ENCODE measurements at regions of chr15 and their contacts with region 1.

Region 1: DNA sequence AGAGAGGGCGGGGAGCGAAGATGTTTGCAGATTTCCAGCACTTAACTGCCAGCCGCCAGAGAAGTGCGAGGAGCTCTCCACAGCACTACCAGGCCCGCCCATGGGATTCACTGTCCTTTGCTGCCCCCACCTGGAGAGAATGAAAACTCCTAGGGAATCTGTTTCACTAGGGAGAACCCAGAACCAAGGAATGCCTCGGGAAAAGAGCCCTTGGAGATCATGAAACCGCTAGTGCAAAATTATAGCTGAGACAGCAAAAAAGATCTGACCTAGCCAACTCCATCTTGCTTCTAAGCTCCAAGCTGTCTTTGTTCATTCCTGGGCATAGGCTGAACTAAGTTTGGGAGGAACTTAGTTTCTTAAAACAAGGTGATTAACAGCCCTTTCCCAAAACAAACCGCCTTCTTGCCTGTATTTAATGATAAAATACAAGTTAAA is 82.6 kb upstream of the GCNT3 start:
- DNase-seq: peak; percentile 77
- H3K4me3 Mint-ChIP-seq: no peak overlapping the region
- H3K27ac Mint-ChIP-seq: no peak overlapping the region
- H3K4me1 Mint-ChIP-seq: peaks cover 9% of the 10 kb centered on the region
- H3K27me3 Mint-ChIP-seq: peaks cover 13% of the 10 kb centered on the region

Region 2: DNA sequence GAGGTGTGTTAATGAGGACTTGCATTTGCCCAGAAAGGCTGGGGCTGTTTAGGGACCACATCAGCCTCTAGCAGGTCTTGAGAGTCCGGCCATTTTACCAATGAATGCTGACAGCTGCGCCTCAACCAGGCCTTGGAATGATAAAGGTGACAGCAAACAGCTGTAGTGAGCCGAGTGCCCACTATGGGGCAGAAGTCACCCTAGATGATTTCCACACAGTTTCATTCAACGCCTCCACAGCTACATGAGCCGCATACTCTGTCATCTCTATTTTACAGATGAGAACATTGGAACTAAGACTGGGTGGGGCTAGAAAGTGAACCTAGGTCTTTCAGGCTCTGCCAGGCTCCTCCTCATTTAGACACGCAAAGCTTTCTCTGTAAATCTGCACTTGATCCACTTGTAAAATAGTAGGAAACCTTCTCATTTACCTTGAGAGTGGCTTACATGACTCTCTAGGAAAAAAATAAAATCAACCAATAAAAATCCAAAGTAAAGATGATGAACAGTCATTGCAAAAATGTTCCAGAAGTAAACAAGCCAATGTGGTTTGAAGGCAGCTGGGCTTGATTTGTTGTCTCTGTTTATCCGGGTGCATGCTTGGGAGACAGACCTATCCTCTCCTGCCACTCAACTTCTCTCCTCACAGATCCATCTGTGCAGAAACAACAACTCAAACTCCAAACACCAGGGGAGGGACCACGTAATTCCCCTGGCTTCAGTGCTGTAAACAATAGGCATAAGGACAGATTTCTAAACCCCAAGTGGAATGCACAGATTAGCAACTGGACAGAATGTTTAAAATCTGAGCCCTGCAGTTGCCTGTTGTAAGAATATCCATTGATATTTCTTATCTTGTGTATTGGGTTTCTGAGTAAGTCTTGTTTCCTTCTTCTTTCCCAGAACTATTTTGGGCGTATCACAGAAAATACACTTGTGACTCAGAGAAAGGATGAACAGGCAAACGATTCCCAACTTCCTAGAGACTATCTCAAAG is 353.9 kb before region 1 on chr15:
- CTCF ChIA-PET with region 1: interaction called, 10 read pairs
- POLR2A ChIA-PET with region 1: no interaction called
- intact Hi-C with region 1: no loop called
- DNase-seq: peak; percentile 70
- H3K4me3 Mint-ChIP-seq: no peak overlapping the region
- H3K27ac Mint-ChIP-seq: no peak overlapping the region
- H3K4me1 Mint-ChIP-seq: peaks cover 14% of the 10 kb centered on the region
- H3K27me3 Mint-ChIP-seq: peaks cover 14% of the 10 kb centered on the region

Region 3: GRCh38 chr15:59543721-59544547 is 14.9 kb after region 1 on chr15:
- CTCF ChIA-PET with region 1: interaction called, 15 read pairs
- POLR2A ChIA-PET with region 1: no interaction called
- intact Hi-C with region 1: no loop called
- DNase-seq: peak; percentile 18
- H3K4me3 Mint-ChIP-seq: no peak overlapping the region
- H3K27ac Mint-ChIP-seq: no peak overlapping the region
- H3K4me1 Mint-ChIP-seq: peaks cover 9% of the 10 kb centered on the region
- H3K27me3 Mint-ChIP-seq: peaks cover 6% of the 10 kb centered on the region

Region 4: DNA sequence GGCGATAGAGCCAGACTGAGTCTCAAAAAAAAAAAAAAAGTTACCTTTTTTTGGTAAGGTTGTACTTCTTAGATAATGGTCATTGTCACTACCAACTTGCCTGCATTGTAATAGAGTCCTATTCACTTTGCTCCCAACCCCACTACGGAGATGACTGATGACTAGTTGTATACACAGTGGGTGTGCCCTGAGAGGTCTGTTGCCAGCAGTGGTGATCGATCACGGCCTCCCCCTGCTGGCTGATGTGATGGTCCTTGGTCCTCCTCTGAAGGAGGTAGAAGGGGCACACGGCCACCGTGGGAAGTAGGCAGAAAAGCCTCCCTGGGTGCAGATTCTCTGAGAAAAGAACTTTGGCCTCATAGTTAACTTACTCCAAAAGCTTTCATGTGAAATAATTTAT is 93.3 kb after region 1 on chr15:
- CTCF ChIA-PET with region 1: interaction called, 43 read pairs
- POLR2A ChIA-PET with region 1: no interaction called
- intact Hi-C with region 1: loop called (anchors 1 kb)
- DNase-seq: peak; percentile 76
- H3K4me3 Mint-ChIP-seq: no peak overlapping the region
- H3K27ac Mint-ChIP-seq: no peak overlapping the region
- H3K4me1 Mint-ChIP-seq: no peaks in the 10 kb centered on the region
- H3K27me3 Mint-ChIP-seq: peaks cover 12% of the 10 kb centered on the region

Region 5: GRCh38 chr15:59642351-59642750 is 113.4 kb after region 1 on chr15:
- CTCF ChIA-PET with region 1: interaction called, 12 read pairs
- POLR2A ChIA-PET with region 1: interaction called, 3 read pairs
- intact Hi-C with region 1: loop called (anchors 5 kb)
- DNase-seq: no peak
- H3K4me3 Mint-ChIP-seq: no peak overlapping the region
- H3K27ac Mint-ChIP-seq: no peak overlapping the region
- H3K4me1 Mint-ChIP-seq: peaks cover 14% of the 10 kb centered on the region
- H3K27me3 Mint-ChIP-seq: no peaks in the 10 kb centered on the region

Region 6: DNA sequence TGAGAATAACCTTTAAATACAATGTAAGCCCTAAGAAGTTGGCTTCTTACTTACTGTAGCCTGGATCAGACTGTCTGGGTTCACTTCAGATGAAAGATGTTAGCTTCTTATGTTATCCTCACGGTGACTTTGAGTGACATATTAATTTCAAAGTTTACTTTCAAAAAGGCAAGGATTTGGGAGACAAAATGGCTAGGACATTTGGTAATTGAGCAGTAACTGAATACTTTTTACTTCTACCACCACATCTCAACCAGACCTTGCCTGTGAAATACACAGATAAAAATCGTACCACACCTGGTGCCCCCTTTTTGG is 196.1 kb after region 1 on chr15:
- CTCF ChIA-PET with region 1: no interaction called
- POLR2A ChIA-PET with region 1: no interaction called
- intact Hi-C with region 1: no loop called
- DNase-seq: no peak
- H3K4me3 Mint-ChIP-seq: no peak overlapping the region
- H3K27ac Mint-ChIP-seq: no peak overlapping the region
- H3K4me1 Mint-ChIP-seq: no peaks in the 10 kb centered on the region
- H3K27me3 Mint-ChIP-seq: peaks cover 7% of the 10 kb centered on the region